HCT116 (cell line): ENCODE measurements at regions of chrX and their contacts with region 1.

Region 1: DNA sequence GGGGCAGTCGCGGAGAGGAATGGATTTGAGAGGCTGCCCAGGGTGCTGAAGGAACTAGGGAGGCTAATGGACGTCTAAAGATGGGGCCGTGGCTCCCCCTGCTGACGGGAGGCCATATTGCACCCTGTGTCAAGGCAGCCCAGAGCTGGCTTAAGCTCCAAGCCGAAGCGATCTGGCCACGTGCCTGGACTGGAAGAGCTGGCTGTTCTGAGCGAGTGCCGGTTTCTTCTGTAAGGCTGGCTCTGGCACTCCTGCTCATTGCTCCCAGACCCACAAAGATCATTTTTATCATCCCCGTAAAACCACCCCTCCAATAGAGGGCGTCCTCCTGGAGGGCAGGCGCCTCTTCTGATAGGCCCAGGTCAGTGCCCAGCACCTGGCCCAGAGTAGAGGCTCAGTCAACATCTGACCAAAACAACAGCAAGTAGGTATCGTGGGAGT is 5.6 kb downstream of the PNCK start:
- DNase-seq: peak; percentile 50
- ATAC-seq: peak; percentile 87
- H3K4me3 ChIP-seq: peak overlapping the region; percentile 30 to 39
- H3K27ac ChIP-seq: no peak overlapping the region; the same call in 1 of the 2 replicates
- H3K4me1 ChIP-seq: 0 out of 4 replicates have a peak, but pooled peaks cover 0 to 3% of the 10 kb centered on the region in 2 experiments
- H3K27me3 ChIP-seq: no peaks in the 10 kb centered on the region
- CTCF ChIP-seq: peak in 2 of 3 experiments; percentile 74 to 76; a peak in 4 of 6 replicates
- POLR2A ChIP-seq: no peak
- RAD21 ChIP-seq: no peak

Region 2: DNA sequence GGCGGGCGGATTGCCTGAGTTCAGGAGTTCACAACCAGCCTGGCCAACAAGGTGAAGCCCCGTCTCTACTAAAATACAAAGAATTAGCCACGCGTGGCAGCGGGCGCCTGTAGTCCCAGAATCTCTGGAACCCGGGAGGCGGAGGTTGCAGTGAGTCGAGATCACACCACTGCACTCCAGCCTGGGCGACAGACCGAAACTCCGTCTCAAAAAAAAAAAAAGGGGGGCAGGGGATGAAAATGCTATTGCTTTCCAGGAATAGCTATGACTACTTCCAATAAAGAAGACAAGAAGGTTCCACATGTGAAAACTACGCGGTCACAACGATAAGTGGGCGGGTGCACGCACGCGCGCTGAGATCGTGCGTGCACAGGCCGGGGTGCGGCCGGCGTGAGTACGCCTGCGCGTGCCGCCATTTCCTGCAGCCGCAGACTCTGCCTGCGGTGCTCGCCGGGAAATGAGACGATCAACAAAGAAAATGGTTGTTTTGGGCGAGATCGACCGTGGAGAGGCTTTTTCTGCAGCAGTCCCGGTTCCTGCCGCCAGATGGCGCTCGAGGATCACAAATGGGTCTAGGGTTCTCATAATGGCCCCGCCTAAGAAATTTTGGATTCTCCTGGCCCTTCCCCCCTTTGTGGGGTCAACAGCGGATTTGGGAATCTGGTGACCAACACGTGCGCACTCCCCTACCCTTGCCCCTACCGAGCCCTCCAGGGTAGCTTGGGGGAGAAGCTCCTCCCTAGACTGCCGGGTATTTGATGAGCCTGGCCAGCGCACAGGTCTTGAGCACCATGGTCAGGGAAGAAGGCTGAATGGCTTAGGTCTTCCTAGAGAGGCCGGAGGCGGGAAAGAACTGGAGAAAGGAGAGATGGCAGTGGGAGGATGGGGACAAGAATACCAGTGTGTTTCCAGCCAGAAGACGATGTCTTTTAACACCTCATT is 709.2 kb before region 1 on chrX:
- CTCF ChIA-PET with region 1: no interaction called
- POLR2A ChIA-PET with region 1: no interaction called
- RAD21 ChIA-PET with region 1: no interaction called
- intact Hi-C with region 1: loop called (anchors 10 kb)
- DNase-seq: peak; percentile 68
- ATAC-seq: peak; percentile 97
- H3K4me3 ChIP-seq: peak overlapping the region; percentile 24 to 33
- H3K27ac ChIP-seq: peak overlapping the region; percentile 55; the same call in 1 of the 2 replicates
- H3K4me1 ChIP-seq: peaks cover 2 to 8% of the 10 kb centered on the region in 2 experiments; a peak in 3 of 4 replicates
- H3K27me3 ChIP-seq: no peaks in the 10 kb centered on the region
- CTCF ChIP-seq: peak; percentile 63 to 68 (median 64)
- POLR2A ChIP-seq: no peak
- RAD21 ChIP-seq: peak; percentile 89

Region 3: DNA sequence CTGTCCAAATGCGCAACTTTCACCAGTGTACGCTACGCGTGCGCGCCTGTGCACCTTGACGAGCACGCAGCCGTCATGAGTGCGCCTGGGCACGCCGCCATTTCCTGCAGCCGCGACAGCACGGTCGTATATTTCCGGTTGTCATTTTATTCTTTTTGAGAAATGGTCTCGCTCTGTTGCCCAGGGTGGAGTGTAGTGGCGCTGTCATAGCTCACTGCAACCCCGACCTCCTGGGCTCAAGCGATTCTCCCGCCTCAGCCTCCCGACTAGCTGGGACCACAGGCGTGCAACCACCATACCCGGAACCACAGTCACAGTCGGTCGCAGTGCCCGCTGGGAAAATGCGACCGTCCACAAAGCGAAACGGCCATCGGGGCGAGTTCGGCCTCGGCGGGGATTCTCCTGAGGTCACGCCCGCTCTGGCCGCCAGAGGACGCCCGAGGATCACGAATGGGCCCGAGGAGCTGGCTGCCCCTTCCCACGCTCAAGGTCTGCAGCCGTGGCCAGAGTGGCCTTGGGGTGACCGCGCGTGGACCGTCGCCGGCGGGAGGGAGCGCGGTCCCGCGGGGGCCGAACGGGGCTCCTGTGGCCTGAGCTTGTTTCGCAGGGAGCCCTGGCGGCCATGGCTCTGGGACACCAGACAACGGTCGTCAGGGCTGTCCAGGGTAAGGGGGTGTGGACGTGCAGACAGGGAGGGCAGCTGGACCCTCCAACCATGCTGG is 635.4 kb before region 1 on chrX:
- CTCF ChIA-PET with region 1: interaction called, 5 read pairs
- POLR2A ChIA-PET with region 1: no interaction called
- RAD21 ChIA-PET with region 1: no interaction called
- intact Hi-C with region 1: loop called (anchors 10 kb)
- DNase-seq: peak; percentile 21
- ATAC-seq: peak; percentile 90
- H3K4me3 ChIP-seq: peak overlapping the region in 1 of 2 experiments; percentile 26; a peak in 1 of 4 replicates
- H3K27ac ChIP-seq: no peak overlapping the region
- H3K4me1 ChIP-seq: peaks cover 0 to 4% of the 10 kb centered on the region in 2 experiments; a peak in 1 of 4 replicates
- H3K27me3 ChIP-seq: no peaks in the 10 kb centered on the region
- CTCF ChIP-seq: peak; percentile 64 to 69 (median 66)
- POLR2A ChIP-seq: no peak
- RAD21 ChIP-seq: peak; percentile 95

Region 4: DNA sequence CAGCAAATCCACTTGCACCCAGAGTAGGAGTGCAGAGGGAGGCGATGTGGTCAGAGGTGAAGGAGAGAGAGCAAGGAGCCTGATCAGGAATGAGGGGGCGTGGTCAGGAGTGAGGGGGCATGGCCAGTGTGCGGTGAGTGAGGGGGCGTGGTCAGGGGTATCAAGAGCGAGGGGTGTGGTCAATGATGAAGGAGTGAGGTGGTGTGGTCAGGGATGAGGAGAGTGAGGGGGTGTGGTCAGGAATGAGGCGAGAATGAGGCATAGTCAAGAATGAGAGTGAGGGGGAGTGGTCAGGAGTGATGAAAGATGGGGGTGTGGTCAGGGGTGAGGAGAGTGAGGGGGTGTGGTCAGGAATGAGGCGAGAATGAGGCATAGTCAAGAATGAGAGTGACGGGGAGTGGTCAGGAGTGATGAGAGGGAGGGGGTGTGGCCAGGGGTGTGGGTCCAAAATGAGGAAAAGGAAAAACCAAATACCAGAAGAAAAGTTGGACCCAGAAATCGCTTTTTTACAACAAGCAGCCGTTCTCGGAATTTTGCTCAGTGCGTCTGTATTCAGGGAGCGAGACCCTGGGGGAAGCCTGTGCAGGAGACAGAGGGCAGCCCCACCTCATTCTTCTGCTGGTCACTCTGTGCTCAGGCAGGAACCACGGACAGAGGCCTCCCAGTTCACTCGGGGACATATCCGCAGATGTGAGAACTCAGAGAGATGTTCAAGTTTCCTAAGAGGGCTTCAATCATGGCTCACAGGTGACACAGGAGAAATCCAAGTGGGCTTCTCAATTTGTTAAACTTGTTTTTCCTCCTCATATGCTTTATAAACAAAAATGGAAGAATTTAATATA is 441.4 kb before region 1 on chrX:
- CTCF ChIA-PET with region 1: no interaction called
- POLR2A ChIA-PET with region 1: no interaction called
- RAD21 ChIA-PET with region 1: no interaction called
- intact Hi-C with region 1: no loop called
- DNase-seq: peak; percentile 67
- ATAC-seq: peak; percentile 91
- H3K4me3 ChIP-seq: no peak overlapping the region
- H3K27ac ChIP-seq: no peak overlapping the region
- H3K4me1 ChIP-seq: no peaks in the 10 kb centered on the region
- H3K27me3 ChIP-seq: peaks cover 26% of the 10 kb centered on the region
- CTCF ChIP-seq: no peak
- POLR2A ChIP-seq: no peak
- RAD21 ChIP-seq: no peak

Region 5: DNA sequence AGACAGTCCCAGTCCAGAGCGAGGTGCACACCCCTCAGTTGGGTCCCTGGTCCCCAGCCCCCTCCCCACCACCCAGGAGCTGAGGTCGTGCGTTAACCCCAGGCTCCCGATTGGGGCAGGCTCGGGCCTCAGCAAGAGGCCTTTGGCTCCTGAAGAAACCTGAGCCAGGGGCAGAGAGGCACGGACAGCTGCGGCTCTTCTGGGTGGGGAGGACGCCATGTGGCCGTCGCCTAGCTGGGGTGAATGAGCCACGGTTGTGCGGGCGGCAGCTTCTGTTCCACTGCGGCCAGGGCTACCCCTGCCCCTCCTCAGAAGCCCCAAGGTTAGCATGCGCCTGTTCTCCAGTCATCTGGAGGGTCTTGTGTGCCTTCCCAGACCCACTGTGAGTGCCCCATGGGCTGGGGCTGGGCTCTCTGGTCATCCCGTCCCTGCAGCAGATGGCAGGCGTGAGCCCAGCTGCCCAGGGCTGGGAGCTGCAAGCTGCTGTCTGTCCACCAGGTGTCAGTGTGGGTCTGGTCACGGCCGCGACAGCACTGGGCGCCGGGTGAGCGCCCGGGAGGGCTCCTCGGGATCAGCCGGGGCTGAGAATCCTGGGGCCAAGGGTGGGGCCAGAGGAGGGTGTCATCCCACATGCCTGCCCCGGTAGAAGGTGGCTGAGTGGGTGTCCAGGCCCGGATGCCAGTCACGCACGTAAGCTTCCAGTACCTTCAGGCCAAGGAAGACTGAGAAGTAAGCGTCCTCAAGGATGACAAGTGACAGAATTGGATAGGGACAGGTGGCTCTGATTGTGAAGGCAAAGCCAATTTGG is 128.6 kb before region 1 on chrX:
- CTCF ChIA-PET with region 1: interaction called, 25 read pairs
- POLR2A ChIA-PET with region 1: no interaction called
- RAD21 ChIA-PET with region 1: interaction called, 4 to 7 read pairs
- intact Hi-C with region 1: loop called (anchors 1 kb)
- DNase-seq: peak; percentile 24
- ATAC-seq: peak; percentile 96
- H3K4me3 ChIP-seq: no peak overlapping the region
- H3K27ac ChIP-seq: no peak overlapping the region
- H3K4me1 ChIP-seq: peaks cover 0 to 5% of the 10 kb centered on the region in 2 experiments; a peak in 1 of 4 replicates
- H3K27me3 ChIP-seq: no peaks in the 10 kb centered on the region
- CTCF ChIP-seq: peak in 2 of 3 experiments; percentile 75 to 87; a peak in 4 of 6 replicates
- POLR2A ChIP-seq: no peak
- RAD21 ChIP-seq: no peak

Region 6: GRCh38 chrX:153554519-153555167 is 113.3 kb before region 1 on chrX:
- CTCF ChIA-PET with region 1: interaction called, 11 read pairs
- POLR2A ChIA-PET with region 1: no interaction called
- RAD21 ChIA-PET with region 1: interaction called in 1 of 2 experiments, 3 read pairs
- intact Hi-C with region 1: loop called (anchors 1 kb)
- DNase-seq: peak; percentile 24
- ATAC-seq: peak; percentile 93
- H3K4me3 ChIP-seq: no peak overlapping the region
- H3K27ac ChIP-seq: no peak overlapping the region
- H3K4me1 ChIP-seq: no peaks in the 10 kb centered on the region
- H3K27me3 ChIP-seq: no peaks in the 10 kb centered on the region
- CTCF ChIP-seq: peak; percentile 56 to 75 (median 59)
- POLR2A ChIP-seq: no peak
- RAD21 ChIP-seq: peak; percentile 74

Region 7: GRCh38 chrX:153609917-153610428 is 58.0 kb before region 1 on chrX:
- CTCF ChIA-PET with region 1: interaction called, 3 read pairs
- POLR2A ChIA-PET with region 1: no interaction called
- RAD21 ChIA-PET with region 1: no interaction called
- intact Hi-C with region 1: loop called (anchors 10 kb)
- DNase-seq: peak; percentile 28
- ATAC-seq: peak; percentile 99
- H3K4me3 ChIP-seq: no peak overlapping the region
- H3K27ac ChIP-seq: no peak overlapping the region
- H3K4me1 ChIP-seq: no peaks in the 10 kb centered on the region
- H3K27me3 ChIP-seq: no peaks in the 10 kb centered on the region
- CTCF ChIP-seq: peak; percentile 51 to 73 (median 65); a peak in 5 of 6 replicates
- POLR2A ChIP-seq: no peak
- RAD21 ChIP-seq: peak; percentile 62

Region 8: GRCh38 chrX:153649178-153649914 is 18.6 kb before region 1 on chrX:
- CTCF ChIA-PET with region 1: interaction called, 12 read pairs
- POLR2A ChIA-PET with region 1: no interaction called
- RAD21 ChIA-PET with region 1: no interaction called
- intact Hi-C with region 1: no loop called
- DNase-seq: no peak
- ATAC-seq: peak; percentile 68
- H3K4me3 ChIP-seq: no peak overlapping the region
- H3K27ac ChIP-seq: no peak overlapping the region
- H3K4me1 ChIP-seq: peaks cover 0 to 14% of the 10 kb centered on the region in 2 experiments; a peak in 2 of 4 replicates
- H3K27me3 ChIP-seq: no peaks in the 10 kb centered on the region
- CTCF ChIP-seq: peak in 2 of 3 experiments; percentile 44 to 46; a peak in 4 of 6 replicates
- POLR2A ChIP-seq: no peak
- RAD21 ChIP-seq: no peak